ENCODE measurements at regions of chr7 and their contacts with region 1.

Region 1: GRCh38 chr7:24979863-24980533 is at the start of gene OSBPL3:
- DNase-seq: peak; percentile 97
- H3K4me3 ChIP-seq: peak within 1 kb of the TSS; percentile 88
- H3K27ac ChIP-seq: peak within 1 kb of the TSS; percentile 60
- H3K4me1 ChIP-seq: peaks cover 63% of the 10 kb centered on the region
- CTCF ChIP-seq: no peak
- total RNA-seq, gene OSBPL3: 24.6 and 28.7 TPM in 2 replicates

Region 2: DNA sequence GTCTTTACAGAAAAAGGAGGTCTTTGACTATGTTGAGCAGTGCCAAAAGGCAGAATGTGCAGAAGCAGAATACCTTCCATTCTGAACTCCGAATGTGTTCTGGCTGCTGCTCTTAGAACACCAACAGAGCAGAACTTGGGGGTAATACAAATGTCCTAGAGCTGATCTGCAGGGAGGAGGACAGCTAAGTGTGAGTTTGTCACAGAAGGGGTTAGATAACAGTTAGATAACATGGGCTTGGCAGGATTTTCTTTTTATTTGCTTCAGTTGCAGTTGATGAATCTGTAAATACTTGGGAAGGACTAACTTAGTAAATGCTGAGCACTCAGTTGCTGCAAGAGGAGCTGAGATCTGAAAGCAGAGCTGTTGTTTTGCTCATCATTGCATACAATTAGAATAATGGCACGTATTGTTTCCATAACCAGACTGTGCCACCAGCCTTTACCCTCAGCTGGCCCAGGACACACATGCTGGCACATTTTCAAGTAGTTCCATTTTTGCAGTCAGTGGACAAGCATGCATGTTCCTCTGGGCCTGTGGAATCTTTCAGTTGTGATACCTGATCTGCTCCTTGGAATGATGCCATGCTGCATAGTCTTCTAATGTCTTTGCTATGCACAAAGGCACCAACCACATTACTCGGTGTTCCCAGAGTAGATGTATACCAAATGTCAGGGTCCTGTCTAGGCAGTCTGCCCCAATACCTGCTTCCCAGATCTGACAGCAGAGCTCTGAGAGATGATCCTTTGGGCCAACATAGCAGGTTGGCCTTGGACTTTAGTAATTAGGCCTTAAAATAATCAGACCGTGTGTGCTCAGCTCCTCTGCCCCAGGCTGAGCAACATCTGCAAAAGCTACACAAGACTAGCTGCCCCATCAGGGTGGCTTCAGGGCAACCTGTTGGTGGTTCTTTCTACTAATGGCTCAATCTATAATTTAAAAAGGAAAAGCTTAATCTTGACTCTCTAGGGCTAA is 278.4 kb before region 1 on chr7:
- CTCF ChIA-PET with region 1: no interaction called
- POLR2A ChIA-PET with region 1: no interaction called
- intact Hi-C with region 1: no loop called
- DNase-seq: no peak
- H3K4me3 ChIP-seq: no peak overlapping the region
- H3K27ac ChIP-seq: no peak overlapping the region
- H3K4me1 ChIP-seq: peaks cover 11% of the 10 kb centered on the region
- CTCF ChIP-seq: no peak

Region 3: GRCh38 chr7:24819916-24820689 is 159.9 kb before region 1 on chr7:
- CTCF ChIA-PET with region 1: interaction called, 12 read pairs
- POLR2A ChIA-PET with region 1: interaction called, 11 read pairs
- intact Hi-C with region 1: loop called (anchors 1 kb)
- DNase-seq: peak; percentile 95
- H3K4me3 ChIP-seq: peak overlapping the region; percentile 48
- H3K27ac ChIP-seq: peak overlapping the region; percentile 98
- H3K4me1 ChIP-seq: peaks cover 52% of the 10 kb centered on the region
- CTCF ChIP-seq: peak; percentile 97

Region 4: DNA sequence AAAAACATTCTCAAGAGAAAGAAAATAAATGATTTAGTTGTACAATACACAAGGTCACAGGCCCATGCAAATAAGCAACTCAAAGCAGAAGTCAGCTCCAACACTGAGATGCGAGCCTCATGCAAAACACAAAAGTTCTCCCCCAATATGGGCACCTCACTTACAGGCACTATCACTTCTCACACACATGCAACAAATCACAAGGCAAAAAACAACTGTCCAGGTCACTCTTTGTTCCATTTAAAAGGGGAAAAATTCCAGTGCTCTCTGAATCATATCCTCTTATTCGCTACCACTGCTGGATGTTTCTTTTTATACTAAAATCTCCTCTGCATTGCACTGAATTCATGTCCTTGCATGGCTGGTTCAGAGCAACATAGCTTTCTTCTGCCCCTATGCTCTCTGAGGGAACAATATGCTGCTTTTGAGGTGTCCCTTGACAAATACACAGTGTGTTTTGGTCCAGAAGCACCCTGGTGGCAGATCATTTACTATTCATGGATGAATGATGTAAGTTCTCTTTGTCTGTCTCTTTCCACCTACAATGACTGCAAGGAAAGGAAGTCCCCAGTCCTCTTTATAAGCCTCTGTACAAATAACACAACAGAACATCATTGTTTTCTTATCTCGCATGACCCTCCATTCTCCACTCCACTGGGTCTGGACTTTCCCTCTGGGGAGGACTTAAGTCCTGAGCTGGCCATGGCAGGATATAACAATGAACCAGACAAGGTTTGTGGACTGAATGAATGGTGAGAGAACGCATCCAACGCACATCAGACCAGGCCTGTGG is 137.4 kb before region 1 on chr7:
- CTCF ChIA-PET with region 1: no interaction called
- POLR2A ChIA-PET with region 1: interaction called, 3 read pairs
- intact Hi-C with region 1: loop called (anchors 2 kb)
- DNase-seq: peak; percentile 71
- H3K4me3 ChIP-seq: peak overlapping the region; percentile 65
- H3K27ac ChIP-seq: peak overlapping the region; percentile 92
- H3K4me1 ChIP-seq: peaks cover 96% of the 10 kb centered on the region
- CTCF ChIP-seq: 0 out of 2 replicates have a peak, but pooled peaks have one; percentile 23

Region 5: GRCh38 chr7:24896031-24896501 is 83.9 kb before region 1 on chr7:
- CTCF ChIA-PET with region 1: interaction called, 3 read pairs
- POLR2A ChIA-PET with region 1: interaction called, 14 read pairs
- intact Hi-C with region 1: loop called (anchors 1 kb)
- DNase-seq: peak; percentile 95
- H3K4me3 ChIP-seq: peak overlapping the region; percentile 33
- H3K27ac ChIP-seq: peak overlapping the region; percentile 93
- H3K4me1 ChIP-seq: peaks cover 98% of the 10 kb centered on the region
- CTCF ChIP-seq: peak; percentile 74

Region 6: GRCh38 chr7:24965831-24966709 is 13.9 kb before region 1 on chr7:
- CTCF ChIA-PET with region 1: no interaction called
- POLR2A ChIA-PET with region 1: interaction called, 13 read pairs
- intact Hi-C with region 1: loop called (anchors 1 kb)
- DNase-seq: peak; percentile 83
- H3K4me3 ChIP-seq: peak overlapping the region; percentile 34
- H3K27ac ChIP-seq: peak overlapping the region; percentile 81
- H3K4me1 ChIP-seq: peaks cover 88% of the 10 kb centered on the region
- CTCF ChIP-seq: no peak; the same call in 1 of the 2 replicates

Region 7: GRCh38 chr7:25007668-25008067 is 27.7 kb after region 1 on chr7:
- CTCF ChIA-PET with region 1: no interaction called
- POLR2A ChIA-PET with region 1: no interaction called
- intact Hi-C with region 1: no loop called
- DNase-seq: no peak
- H3K4me3 ChIP-seq: no peak overlapping the region
- H3K27ac ChIP-seq: no peak overlapping the region
- H3K4me1 ChIP-seq: no peaks in the 10 kb centered on the region
- CTCF ChIP-seq: 0 out of 2 replicates have a peak, but pooled peaks have one; percentile 26

Region 8: DNA sequence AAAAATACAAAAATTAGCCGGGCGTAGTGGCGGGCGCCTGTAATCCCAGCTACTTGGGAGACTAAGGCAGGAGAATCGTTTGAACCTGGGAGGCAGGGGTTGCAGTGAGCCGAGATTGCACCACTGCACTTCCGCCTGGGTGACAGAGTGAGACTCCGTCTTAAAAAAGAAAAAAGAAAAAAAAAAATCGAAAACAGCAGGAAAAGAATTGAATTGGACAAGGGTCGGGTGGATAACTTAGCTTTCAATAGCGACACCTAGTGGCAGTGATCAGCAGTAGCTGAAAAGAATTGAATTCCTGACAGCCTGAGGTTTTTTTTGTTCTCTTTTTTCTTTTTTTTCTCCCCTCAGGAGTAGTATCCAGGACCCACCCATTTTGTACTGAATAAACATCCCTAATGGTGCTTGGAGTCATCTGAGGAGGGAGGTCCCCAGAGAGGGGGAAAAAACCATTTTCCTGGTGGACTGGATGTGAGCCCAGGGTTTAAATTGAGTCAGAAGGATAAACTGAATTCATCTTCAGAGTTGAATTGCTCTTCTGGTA is 90.0 kb after region 1 on chr7:
- CTCF ChIA-PET with region 1: interaction called, 3 read pairs
- POLR2A ChIA-PET with region 1: no interaction called
- intact Hi-C with region 1: loop called (anchors 5 kb)
- DNase-seq: peak; percentile 85
- H3K4me3 ChIP-seq: no peak overlapping the region
- H3K27ac ChIP-seq: no peak overlapping the region
- H3K4me1 ChIP-seq: peaks cover 32% of the 10 kb centered on the region
- CTCF ChIP-seq: peak; percentile 93

Measured in OCI-LY7 (cell line).